ENCODE measurements at regions of chr21 and their contacts with region 1.

Region 1: GRCh38 chr21:45140346-45140940 is 66.1 kb downstream of the ADARB1 start:
- DNase-seq: peak; percentile 81
- ATAC-seq: peak; percentile 92
- H3K4me3 Mint-ChIP-seq: no peak overlapping the region
- H3K27ac Mint-ChIP-seq: no peak overlapping the region
- H3K4me1 Mint-ChIP-seq: no peaks in the 10 kb centered on the region
- H3K27me3 Mint-ChIP-seq: no peaks in the 10 kb centered on the region
- CTCF ChIP-seq: peak; percentile 67

Region 2: DNA sequence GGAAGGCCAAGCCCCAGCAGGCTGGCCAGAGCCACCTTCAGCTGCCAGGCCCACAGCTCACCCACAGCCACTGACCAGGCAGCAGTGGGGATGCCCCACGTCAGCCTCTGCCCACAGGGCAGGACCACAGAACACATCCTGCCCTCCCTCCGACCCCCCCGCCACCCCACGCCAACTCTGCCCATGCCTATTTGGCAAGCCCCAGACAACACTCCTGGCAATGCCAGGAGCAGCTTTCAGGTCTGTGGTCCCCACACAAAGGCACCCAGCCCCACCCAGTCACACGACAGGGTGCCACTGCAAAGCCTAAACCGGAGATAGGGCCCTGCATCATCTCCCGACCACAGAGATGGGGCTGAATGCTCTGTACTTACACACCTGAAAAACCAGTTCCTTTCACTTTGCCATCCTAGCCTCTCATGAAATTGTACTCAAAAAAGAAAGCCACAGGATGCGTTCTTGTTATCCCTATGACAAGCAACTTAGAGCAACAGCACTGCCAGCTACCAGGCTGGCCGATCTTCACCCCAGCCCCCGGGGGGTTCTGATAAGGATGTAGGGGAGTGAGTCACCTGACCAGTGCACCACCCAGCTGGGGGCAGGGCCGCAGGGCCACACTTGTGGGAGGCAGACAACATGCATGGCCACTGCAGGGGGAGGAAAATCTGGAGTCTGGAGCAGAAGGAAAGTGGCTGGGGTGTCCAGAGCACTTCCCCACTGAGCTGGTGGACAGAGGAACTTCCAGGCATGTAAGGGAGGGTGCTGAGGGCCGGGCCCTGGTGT is 375.0 kb before region 1 on chr21:
- CTCF ChIA-PET with region 1: no interaction called
- POLR2A ChIA-PET with region 1: no interaction called
- intact Hi-C with region 1: no loop called
- DNase-seq: peak; percentile 62
- ATAC-seq: peak; percentile 86
- H3K4me3 Mint-ChIP-seq: peak overlapping the region; percentile 24
- H3K27ac Mint-ChIP-seq: peak overlapping the region; percentile 81
- H3K4me1 Mint-ChIP-seq: peaks cover 23% of the 10 kb centered on the region
- H3K27me3 Mint-ChIP-seq: no peaks in the 10 kb centered on the region
- CTCF ChIP-seq: no peak

Region 3: GRCh38 chr21:44949779-44950198 is 190.7 kb before region 1 on chr21:
- CTCF ChIA-PET with region 1: interaction called, 158 read pairs
- POLR2A ChIA-PET with region 1: no interaction called
- intact Hi-C with region 1: loop called (anchors 5 kb)
- DNase-seq: peak; percentile 89
- ATAC-seq: peak; percentile 90
- H3K4me3 Mint-ChIP-seq: no peak overlapping the region
- H3K27ac Mint-ChIP-seq: no peak overlapping the region
- H3K4me1 Mint-ChIP-seq: peaks cover 12% of the 10 kb centered on the region
- H3K27me3 Mint-ChIP-seq: no peaks in the 10 kb centered on the region
- CTCF ChIP-seq: peak; percentile 94

Region 4: GRCh38 chr21:45067462-45068285 is 72.8 kb before region 1 on chr21:
- CTCF ChIA-PET with region 1: interaction called, 21 read pairs
- POLR2A ChIA-PET with region 1: no interaction called
- intact Hi-C with region 1: loop called (anchors 10 kb)
- DNase-seq: no peak
- ATAC-seq: no peak
- H3K4me3 Mint-ChIP-seq: no peak overlapping the region
- H3K27ac Mint-ChIP-seq: no peak overlapping the region
- H3K4me1 Mint-ChIP-seq: no peaks in the 10 kb centered on the region
- H3K27me3 Mint-ChIP-seq: no peaks in the 10 kb centered on the region
- CTCF ChIP-seq: no peak

Region 5: DNA sequence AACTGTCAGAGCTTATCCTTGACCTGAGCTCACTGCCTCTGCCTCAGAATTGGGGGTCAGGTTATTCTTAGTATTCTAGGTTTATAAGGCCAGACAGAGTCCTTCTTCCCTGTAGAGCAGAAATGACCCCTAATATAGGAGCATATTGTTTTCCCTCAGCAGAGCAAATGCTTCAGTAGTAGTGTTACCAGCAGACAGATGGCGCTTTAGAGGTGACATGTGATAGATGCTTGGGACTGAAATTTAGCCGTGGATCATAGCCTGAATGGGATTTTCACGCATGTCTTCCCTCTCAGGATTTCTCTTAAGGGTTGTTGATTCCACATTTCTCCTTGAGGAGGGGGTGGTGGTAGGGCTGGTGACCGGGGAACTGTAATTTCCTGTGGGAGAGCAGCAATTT is 41.6 kb before region 1 on chr21:
- CTCF ChIA-PET with region 1: interaction called, 34 read pairs
- POLR2A ChIA-PET with region 1: no interaction called
- intact Hi-C with region 1: no loop called
- DNase-seq: no peak
- ATAC-seq: no peak
- H3K4me3 Mint-ChIP-seq: no peak overlapping the region
- H3K27ac Mint-ChIP-seq: no peak overlapping the region
- H3K4me1 Mint-ChIP-seq: peaks cover 26% of the 10 kb centered on the region
- H3K27me3 Mint-ChIP-seq: no peaks in the 10 kb centered on the region
- CTCF ChIP-seq: peak; percentile 31

Region 6: DNA sequence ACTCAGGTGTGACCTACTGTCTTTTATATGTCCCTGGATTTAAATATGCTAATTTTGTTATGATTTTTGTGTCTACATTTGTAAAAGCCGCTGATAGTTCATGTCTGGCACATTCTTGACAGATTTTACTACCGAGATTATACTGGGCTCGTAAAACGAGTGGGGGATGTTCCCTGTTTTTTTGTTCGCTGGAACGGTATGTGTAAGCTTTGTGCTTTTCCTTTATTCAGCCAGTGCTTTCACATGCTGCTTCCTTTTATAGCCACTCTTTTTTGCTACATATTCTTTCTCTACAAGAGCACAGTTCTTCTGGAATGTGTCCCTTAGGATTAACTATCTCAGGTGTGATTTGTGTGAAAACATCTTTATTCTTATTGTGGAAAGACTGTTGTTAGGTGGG is 19.5 kb before region 1 on chr21:
- CTCF ChIA-PET with region 1: interaction called, 152 read pairs
- POLR2A ChIA-PET with region 1: interaction called, 4 read pairs
- intact Hi-C with region 1: no loop called
- DNase-seq: no peak
- ATAC-seq: no peak
- H3K4me3 Mint-ChIP-seq: no peak overlapping the region
- H3K27ac Mint-ChIP-seq: no peak overlapping the region
- H3K4me1 Mint-ChIP-seq: peaks cover 5% of the 10 kb centered on the region
- H3K27me3 Mint-ChIP-seq: no peaks in the 10 kb centered on the region
- CTCF ChIP-seq: no peak

Region 7: DNA sequence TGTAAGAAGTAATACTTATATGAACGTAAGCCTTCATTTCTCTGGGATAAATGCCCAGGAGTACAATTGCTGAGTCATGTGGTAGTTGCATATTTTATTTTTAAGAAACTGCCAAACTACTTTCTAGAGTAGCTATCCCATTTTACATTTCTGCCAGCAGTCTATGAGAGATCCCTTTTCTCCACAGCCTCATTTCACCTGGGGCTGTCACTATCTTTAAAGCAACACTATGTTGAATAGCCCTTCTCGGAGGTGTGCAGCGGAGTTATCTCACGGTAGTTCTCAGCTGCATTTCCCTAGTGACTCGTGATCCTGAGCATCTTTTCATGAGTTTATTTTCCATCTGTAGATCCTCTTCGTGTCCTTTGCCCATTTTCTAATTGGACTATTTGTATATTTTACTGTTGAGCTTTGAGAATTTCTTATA is 27.4 kb after region 1 on chr21:
- CTCF ChIA-PET with region 1: interaction called, 46 read pairs
- POLR2A ChIA-PET with region 1: no interaction called
- intact Hi-C with region 1: no loop called
- DNase-seq: no peak
- ATAC-seq: no peak
- H3K4me3 Mint-ChIP-seq: no peak overlapping the region
- H3K27ac Mint-ChIP-seq: no peak overlapping the region
- H3K4me1 Mint-ChIP-seq: peaks cover 20% of the 10 kb centered on the region
- H3K27me3 Mint-ChIP-seq: no peaks in the 10 kb centered on the region
- CTCF ChIP-seq: no peak

Region 8: DNA sequence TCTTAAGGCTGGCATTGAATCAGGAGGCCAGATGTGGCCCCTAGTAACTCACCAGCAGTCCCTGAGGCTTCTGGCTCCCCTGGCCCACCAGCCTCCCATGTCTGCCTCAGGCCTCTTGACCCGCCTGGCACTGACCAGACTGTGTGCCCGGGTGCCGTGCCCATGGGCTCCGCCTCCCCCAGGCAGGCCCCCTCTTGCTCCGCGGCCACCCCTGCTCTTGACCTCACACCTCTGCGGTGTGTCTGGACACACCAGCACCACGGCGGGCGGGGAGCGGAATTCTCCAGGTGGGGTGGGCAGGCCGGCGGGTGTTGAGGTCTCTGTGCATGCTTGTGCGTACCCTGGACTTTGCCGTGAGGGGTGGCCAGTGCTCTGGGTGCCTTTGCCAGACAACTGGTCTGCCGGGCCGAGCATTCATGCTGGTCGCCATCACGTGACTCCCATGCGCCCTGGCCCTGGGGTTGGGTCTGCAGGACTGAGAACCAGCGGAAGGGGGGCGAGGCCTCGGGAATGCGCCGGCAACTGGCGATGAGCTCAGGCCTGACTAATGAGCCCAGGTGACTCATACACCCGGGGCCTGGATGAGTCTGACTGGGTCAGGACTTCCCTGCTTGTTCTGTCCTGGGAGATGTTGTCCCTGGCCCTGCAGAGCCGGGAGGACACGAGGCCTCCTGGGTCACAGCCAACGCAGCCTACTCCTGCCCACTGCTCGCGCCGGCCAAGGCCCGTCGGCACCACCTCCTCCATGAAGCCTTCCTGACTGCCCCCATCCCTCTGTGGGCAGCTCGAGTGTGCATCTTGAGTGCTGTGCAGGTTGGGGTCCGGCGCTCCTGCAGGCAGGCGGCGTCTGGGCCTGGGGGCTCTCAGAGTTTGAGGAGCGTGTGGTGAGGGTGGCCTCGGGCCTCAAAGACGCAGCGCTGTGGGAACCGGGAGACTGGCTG is 287.2 kb after region 1 on chr21:
- CTCF ChIA-PET with region 1: no interaction called
- POLR2A ChIA-PET with region 1: no interaction called
- intact Hi-C with region 1: no loop called
- DNase-seq: no peak
- ATAC-seq: no peak
- H3K4me3 Mint-ChIP-seq: no peak overlapping the region
- H3K27ac Mint-ChIP-seq: no peak overlapping the region
- H3K4me1 Mint-ChIP-seq: no peaks in the 10 kb centered on the region
- H3K27me3 Mint-ChIP-seq: no peaks in the 10 kb centered on the region
- CTCF ChIP-seq: no peak

Region 9: GRCh38 chr21:45439161-45439872 is 298.9 kb after region 1 on chr21:
- CTCF ChIA-PET with region 1: interaction called, 15 read pairs
- POLR2A ChIA-PET with region 1: no interaction called
- intact Hi-C with region 1: no loop called
- DNase-seq: peak; percentile 89
- ATAC-seq: peak; percentile 90
- H3K4me3 Mint-ChIP-seq: peak overlapping the region; percentile 49
- H3K27ac Mint-ChIP-seq: peak overlapping the region; percentile 5
- H3K4me1 Mint-ChIP-seq: no peaks in the 10 kb centered on the region
- H3K27me3 Mint-ChIP-seq: peaks cover 2% of the 10 kb centered on the region
- CTCF ChIP-seq: peak; percentile 95

Measured in activated CD8-positive, alpha-beta T cell treated with anti-CD3 and anti-CD28 coated beads for 36 hours (primary cell).